ENCODE measurements at regions of chr4 and their contacts with region 1.

Region 1: GRCh38 chr4:75514131-75514948 is at the starts of genes RCHY1 and THAP6:
- DNase-seq: peak; percentile 95
- H3K4me3 Mint-ChIP-seq: no peak within 1 kb of the TSS
- H3K27ac Mint-ChIP-seq: peak within 1 kb of the TSS; percentile 98
- H3K4me1 Mint-ChIP-seq: peaks cover 52% of the 10 kb centered on the region
- H3K27me3 Mint-ChIP-seq: no peaks in the 10 kb centered on the region
- total RNA-seq, gene RCHY1: 30.0 to 32.4 TPM
- total RNA-seq, gene THAP6: 19.4 to 20.7 TPM

Region 2: DNA sequence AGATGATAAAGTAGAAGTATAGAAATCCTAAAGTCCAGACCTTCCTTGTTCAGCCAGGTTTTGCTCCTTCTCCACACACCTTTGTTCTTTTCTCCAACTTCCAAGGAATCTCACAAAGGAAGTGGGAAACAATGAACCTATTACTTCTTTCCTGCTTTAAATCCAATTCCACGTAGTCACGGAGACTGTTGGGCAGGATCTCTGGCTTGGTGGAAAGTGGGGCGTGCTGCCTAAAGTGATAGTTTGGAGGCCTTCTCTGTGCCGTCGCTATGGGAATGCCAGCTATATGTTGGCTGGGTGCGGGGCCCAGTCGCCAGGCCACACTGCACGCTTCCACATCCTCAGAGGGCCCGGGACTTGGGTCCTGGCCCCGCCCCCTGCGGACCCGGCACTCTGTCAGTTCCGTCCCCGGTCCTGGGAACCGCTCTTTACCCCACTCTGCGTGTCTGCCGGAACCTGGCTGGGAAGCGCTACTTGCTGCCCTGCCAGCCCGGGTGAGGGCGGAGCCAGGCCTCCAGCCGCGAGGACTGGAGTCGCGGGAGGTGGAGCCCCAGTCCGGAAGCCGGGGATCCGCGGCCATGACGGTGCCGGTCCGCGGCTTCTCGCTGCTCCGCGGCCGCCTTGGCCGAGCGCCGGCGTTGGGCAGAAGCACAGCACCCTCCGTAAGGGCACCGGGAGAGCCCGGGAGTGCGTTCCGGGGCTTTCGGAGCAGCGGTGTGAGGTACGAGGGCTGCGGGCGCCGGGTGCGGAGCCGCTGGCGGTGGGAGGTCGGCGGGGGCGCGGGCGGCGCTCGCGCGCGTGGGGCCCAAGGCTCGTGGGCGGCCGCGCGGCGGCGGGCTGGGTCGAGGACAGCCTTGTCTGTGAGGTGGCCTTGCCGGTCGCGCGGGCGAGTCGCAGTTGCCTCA is 1356.5 kb before region 1 on chr4 and contains the start of gene MTHFD2L:
- CTCF ChIA-PET with region 1: no interaction called
- POLR2A ChIA-PET with region 1: no interaction called
- intact Hi-C with region 1: loop called (anchors 2 kb)
- DNase-seq: peak; percentile 87
- H3K4me3 Mint-ChIP-seq: peak within 1 kb of the TSS; percentile 88
- H3K27ac Mint-ChIP-seq: peak within 1 kb of the TSS; percentile 74
- H3K4me1 Mint-ChIP-seq: peaks cover 17% of the 10 kb centered on the region
- H3K27me3 Mint-ChIP-seq: peaks cover 2% of the 10 kb centered on the region
- total RNA-seq, gene MTHFD2L: 5.4 to 6.5 TPM

Region 3: DNA sequence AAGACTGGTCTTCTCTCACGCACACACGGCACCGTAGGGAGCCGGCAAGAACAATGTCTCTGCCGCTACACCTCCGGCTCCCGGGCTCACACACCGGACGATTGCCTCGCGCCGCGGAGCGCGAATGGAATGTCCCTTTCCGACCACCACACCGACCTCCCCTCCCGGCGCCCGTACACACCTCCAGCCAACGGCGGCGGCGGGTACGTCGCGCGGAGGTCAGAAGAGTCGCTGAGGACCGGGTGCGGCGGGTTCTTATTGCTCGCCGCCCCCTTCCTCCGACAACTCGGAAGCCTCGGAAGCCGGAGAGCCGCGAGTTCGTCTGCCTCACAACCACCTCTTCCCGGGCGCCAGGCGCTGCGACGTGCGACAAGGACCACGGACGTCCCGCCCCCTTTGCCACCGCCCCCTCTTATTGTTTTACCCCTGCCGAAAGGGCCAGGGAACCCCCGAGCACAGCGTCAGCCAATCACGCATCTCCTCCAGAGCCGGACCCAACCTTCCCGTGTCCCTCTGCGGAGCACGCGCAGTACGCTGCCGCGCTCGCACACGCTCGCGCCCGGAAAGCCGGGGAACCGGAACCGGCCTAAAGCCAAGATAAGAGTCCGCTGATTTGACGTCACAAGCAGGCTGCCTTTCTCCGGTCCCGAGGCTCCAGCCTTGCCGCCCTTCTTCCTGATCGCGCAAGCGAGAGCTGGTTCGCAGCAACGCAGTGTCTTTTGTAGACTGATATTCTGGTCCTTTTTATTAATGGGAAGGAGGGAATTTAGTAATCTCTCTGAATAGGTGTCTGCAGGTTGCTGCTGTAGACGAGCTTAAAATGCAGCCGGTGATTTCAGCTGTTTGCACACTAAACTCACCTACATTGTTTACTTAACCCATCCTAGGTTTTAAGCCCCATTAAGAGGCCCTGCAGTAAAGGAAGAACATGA is 159.0 kb after region 1 on chr4 and contains the start of gene G3BP2:
- CTCF ChIA-PET with region 1: no interaction called
- POLR2A ChIA-PET with region 1: interaction called, 7 read pairs
- intact Hi-C with region 1: loop called (anchors 1 kb)
- DNase-seq: peak; percentile 99
- H3K4me3 Mint-ChIP-seq: peak within 1 kb of the TSS; percentile 99
- H3K27ac Mint-ChIP-seq: peak within 1 kb of the TSS; percentile 99
- H3K4me1 Mint-ChIP-seq: peaks cover 36% of the 10 kb centered on the region
- H3K27me3 Mint-ChIP-seq: peaks cover 3% of the 10 kb centered on the region
- total RNA-seq, gene G3BP2: 137 to 144 TPM

Region 4: GRCh38 chr4:75989846-75990528 is 475.6 kb after region 1 on chr4:
- CTCF ChIA-PET with region 1: no interaction called
- POLR2A ChIA-PET with region 1: no interaction called
- intact Hi-C with region 1: loop called (anchors 2 kb)
- DNase-seq: no peak
- H3K4me3 Mint-ChIP-seq: peak overlapping the region; percentile 85
- H3K27ac Mint-ChIP-seq: peak overlapping the region; percentile 57
- H3K4me1 Mint-ChIP-seq: peaks cover 29% of the 10 kb centered on the region
- H3K27me3 Mint-ChIP-seq: peaks cover 3% of the 10 kb centered on the region

Region 5: DNA sequence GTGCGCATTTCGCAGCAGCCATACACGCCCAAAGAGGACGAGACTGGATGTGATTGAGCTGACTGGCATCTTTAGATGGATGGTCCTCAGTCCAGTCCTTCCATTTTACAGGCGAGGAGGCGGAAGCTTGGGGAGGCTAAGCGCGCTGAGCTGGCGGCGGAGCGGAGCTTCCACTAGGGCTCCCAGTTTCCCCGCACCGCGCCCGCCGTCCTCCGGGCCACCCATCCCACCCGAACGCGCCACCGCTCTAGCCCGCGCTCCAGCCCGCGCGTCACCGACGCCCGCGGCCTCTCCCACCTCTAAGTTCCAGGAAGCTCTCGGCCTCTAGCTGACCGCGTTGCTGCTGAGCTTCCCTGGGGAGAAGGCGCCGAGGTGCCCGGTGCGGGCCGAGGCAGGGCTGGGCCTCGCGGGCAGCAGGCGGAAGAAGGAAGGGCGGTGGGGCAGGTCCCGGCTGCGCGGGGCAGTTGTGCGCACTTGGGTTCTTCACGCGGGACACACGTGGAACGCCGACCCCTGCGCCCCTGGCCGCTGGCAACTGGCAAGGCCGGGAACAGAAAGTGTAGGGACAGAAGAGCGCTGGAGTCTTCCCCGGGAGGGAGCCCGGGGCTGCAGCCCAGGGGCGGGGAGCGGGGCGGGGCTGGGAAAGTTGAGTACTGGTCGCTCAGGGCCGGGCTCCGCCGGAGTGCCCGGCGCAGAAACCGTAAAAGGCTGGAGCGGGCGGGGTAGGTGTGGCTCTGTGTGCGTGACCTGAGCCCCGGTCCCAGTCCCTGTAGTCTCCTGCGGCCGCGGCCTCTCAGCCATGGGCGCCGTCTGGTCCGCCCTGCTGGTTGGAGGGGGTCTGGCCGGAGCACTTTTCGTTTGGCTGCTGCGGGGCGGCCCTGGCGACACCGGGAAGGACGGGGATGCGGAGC is 791.9 kb after region 1 on chr4 and contains the start of gene STBD1:
- CTCF ChIA-PET with region 1: no interaction called
- POLR2A ChIA-PET with region 1: no interaction called
- intact Hi-C with region 1: loop called (anchors 10 kb)
- DNase-seq: peak; percentile 46
- H3K4me3 Mint-ChIP-seq: peak within 1 kb of the TSS; percentile 75
- H3K27ac Mint-ChIP-seq: peak within 1 kb of the TSS; percentile 24
- H3K4me1 Mint-ChIP-seq: peaks cover 30% of the 10 kb centered on the region
- H3K27me3 Mint-ChIP-seq: peaks cover 3% of the 10 kb centered on the region
- total RNA-seq, gene STBD1: 0.63 to 0.67 TPM